HCT116 (cell line): ENCODE measurements at regions of chr3 and their contacts with region 1.

Region 1: GRCh38 chr3:111071257-111072015 is at the start of gene NECTIN3:
- DNase-seq: peak; percentile 96
- ATAC-seq: peak; percentile 88
- H3K4me3 ChIP-seq: peak within 1 kb of the TSS; percentile 89 to 90
- H3K27ac ChIP-seq: peak within 1 kb of the TSS; percentile 96
- H3K4me1 ChIP-seq: peaks cover 12 to 42% of the 10 kb centered on the region in 2 experiments
- H3K27me3 ChIP-seq: no peaks in the 10 kb centered on the region
- CTCF ChIP-seq: no peak
- POLR2A ChIP-seq: peak; percentile 23
- RAD21 ChIP-seq: no peak
- total RNA-seq, gene NECTIN3: 93.6 TPM

Region 2: GRCh38 chr3:109806929-109807328 is 1264.5 kb before region 1 on chr3:
- CTCF ChIA-PET with region 1: no interaction called
- POLR2A ChIA-PET with region 1: no interaction called
- RAD21 ChIA-PET with region 1: no interaction called
- intact Hi-C with region 1: loop called (anchors 10 kb)
- DNase-seq: peak; percentile 88
- ATAC-seq: peak; percentile 70
- H3K4me3 ChIP-seq: peak overlapping the region in 1 of 2 experiments; percentile 21; a peak in 1 of 4 replicates
- H3K27ac ChIP-seq: peak overlapping the region; percentile 71
- H3K4me1 ChIP-seq: peaks cover 24 to 62% of the 10 kb centered on the region in 2 experiments
- H3K27me3 ChIP-seq: no peaks in the 10 kb centered on the region
- CTCF ChIP-seq: no peak
- POLR2A ChIP-seq: no peak
- RAD21 ChIP-seq: no peak; the same call in 1 of the 2 replicates

Region 3: GRCh38 chr3:110314512-110315114 is 756.8 kb before region 1 on chr3:
- CTCF ChIA-PET with region 1: no interaction called
- POLR2A ChIA-PET with region 1: no interaction called
- RAD21 ChIA-PET with region 1: no interaction called
- intact Hi-C with region 1: loop called (anchors 10 kb)
- DNase-seq: peak; percentile 72
- ATAC-seq: peak; percentile 88
- H3K4me3 ChIP-seq: no peak overlapping the region
- H3K27ac ChIP-seq: no peak overlapping the region
- H3K4me1 ChIP-seq: peaks cover 0 to 8% of the 10 kb centered on the region in 2 experiments; a peak in 1 of 4 replicates
- H3K27me3 ChIP-seq: no peaks in the 10 kb centered on the region
- CTCF ChIP-seq: peak; percentile 36 to 75 (median 74); a peak in 5 of 6 replicates
- POLR2A ChIP-seq: no peak
- RAD21 ChIP-seq: peak; percentile 67

Region 4: GRCh38 chr3:110576962-110577361 is 494.5 kb before region 1 on chr3:
- CTCF ChIA-PET with region 1: no interaction called
- POLR2A ChIA-PET with region 1: no interaction called
- RAD21 ChIA-PET with region 1: no interaction called
- intact Hi-C with region 1: loop called (anchors 5 kb)
- DNase-seq: peak; percentile 80
- ATAC-seq: peak; percentile 75
- H3K4me3 ChIP-seq: peak overlapping the region in 1 of 2 experiments; percentile 16; a peak in 1 of 4 replicates
- H3K27ac ChIP-seq: peak overlapping the region; percentile 90
- H3K4me1 ChIP-seq: peaks cover 58 to 71% of the 10 kb centered on the region in 2 experiments
- H3K27me3 ChIP-seq: no peaks in the 10 kb centered on the region
- CTCF ChIP-seq: no peak
- POLR2A ChIP-seq: no peak
- RAD21 ChIP-seq: peak; percentile 30

Region 5: GRCh38 chr3:110677506-110677905 is 393.9 kb before region 1 on chr3:
- CTCF ChIA-PET with region 1: no interaction called
- POLR2A ChIA-PET with region 1: no interaction called
- RAD21 ChIA-PET with region 1: no interaction called
- intact Hi-C with region 1: no loop called
- DNase-seq: no peak
- ATAC-seq: no peak
- H3K4me3 ChIP-seq: no peak overlapping the region
- H3K27ac ChIP-seq: no peak overlapping the region
- H3K4me1 ChIP-seq: no peaks in the 10 kb centered on the region
- H3K27me3 ChIP-seq: no peaks in the 10 kb centered on the region
- CTCF ChIP-seq: no peak
- POLR2A ChIP-seq: no peak
- RAD21 ChIP-seq: no peak

Region 6: DNA sequence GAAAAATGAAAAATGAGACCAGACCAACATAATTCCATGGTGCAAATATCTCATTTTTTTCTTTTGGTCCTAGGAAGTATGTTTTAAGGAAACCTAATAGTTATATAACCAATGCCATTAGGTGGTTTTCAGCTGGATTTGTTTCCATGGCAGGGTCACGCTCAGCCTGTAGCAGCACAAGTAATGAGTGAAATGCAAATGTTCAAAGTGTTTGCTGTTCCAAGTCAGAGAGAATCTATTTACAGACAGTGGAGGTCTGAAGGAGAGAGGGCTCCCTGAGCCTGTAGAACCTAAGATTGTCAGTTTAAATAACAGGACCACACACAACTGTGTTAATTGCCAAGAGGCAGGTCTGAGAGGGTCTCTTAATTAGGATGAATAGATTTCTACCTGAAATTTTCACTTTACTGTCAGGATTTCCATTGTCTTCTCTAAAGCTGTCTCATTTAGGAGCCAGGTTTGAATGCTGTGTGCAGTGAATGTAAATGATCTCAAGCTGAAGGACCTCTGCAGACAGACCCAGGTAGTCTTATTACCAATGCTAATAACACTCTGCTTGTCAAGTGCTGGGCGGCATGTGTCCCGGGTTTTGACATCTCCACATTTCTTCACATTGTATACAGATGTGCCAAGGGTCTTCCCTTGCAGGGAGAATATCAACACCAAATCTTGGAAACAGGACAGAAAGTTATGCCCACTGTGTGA is 317.1 kb before region 1 on chr3:
- CTCF ChIA-PET with region 1: no interaction called
- POLR2A ChIA-PET with region 1: no interaction called
- RAD21 ChIA-PET with region 1: no interaction called
- intact Hi-C with region 1: no loop called
- DNase-seq: no peak
- ATAC-seq: no peak
- H3K4me3 ChIP-seq: no peak overlapping the region
- H3K27ac ChIP-seq: no peak overlapping the region
- H3K4me1 ChIP-seq: peaks cover 0 to 4% of the 10 kb centered on the region in 2 experiments; a peak in 1 of 4 replicates
- H3K27me3 ChIP-seq: no peaks in the 10 kb centered on the region
- CTCF ChIP-seq: no peak
- POLR2A ChIP-seq: no peak
- RAD21 ChIP-seq: no peak

Region 7: DNA sequence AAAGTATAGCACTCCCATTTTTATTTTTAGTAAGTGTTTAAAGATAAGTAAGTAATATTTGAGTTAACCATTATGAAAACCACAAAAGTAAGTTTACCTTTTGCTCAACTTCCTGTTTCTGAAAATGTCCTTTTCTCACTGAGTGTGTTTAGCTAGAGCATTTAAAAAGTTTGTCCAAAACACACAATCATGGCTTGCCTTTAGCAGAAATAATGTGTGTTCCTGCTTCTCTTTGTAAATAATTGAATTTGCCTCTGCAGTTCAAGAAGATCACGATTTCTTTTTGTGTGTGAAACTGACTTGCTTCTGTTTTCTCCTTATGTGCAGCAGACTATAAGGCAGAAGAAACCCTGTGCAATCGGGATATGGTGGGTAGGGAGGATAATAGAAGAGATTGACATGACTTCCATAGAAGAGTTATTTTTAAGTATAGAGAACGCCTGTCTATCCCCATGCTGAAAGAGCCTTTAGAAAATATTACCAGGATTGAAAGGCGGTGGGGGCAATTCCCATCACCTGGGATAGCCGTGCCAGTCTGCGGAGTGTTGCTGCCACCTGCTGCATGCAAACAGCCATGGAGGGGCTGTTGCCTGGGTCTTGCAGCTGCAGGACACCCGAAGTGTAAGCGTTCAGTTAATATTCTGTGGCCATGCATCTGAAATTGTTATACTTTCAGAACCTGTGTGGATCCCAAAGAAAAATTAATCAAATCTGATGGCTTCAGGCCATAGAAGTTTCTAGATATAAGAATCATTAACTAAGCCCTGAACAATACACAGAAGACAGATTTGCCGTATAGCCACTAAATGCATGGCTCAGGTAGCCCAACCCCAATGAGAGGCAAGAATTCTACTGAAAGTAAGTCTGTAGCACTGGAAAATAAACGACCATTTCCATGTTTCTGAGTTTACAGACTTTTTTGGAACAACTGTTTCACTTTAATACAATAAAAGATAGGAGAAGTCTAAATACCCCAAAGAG is 468.2 kb after region 1 on chr3:
- CTCF ChIA-PET with region 1: no interaction called
- POLR2A ChIA-PET with region 1: no interaction called
- RAD21 ChIA-PET with region 1: no interaction called
- intact Hi-C with region 1: loop called (anchors 5 kb)
- DNase-seq: peak; percentile 52
- ATAC-seq: peak; percentile 100
- H3K4me3 ChIP-seq: no peak overlapping the region
- H3K27ac ChIP-seq: no peak overlapping the region
- H3K4me1 ChIP-seq: peaks cover 11 to 26% of the 10 kb centered on the region in 2 experiments; a peak in 3 of 4 replicates
- H3K27me3 ChIP-seq: no peaks in the 10 kb centered on the region
- CTCF ChIP-seq: peak; percentile 75 to 95 (median 93)
- POLR2A ChIP-seq: no peak
- RAD21 ChIP-seq: peak; percentile 97